B cell (primary cell): ENCODE measurements at regions of chr3 and their contacts with region 1.

Region 1: DNA sequence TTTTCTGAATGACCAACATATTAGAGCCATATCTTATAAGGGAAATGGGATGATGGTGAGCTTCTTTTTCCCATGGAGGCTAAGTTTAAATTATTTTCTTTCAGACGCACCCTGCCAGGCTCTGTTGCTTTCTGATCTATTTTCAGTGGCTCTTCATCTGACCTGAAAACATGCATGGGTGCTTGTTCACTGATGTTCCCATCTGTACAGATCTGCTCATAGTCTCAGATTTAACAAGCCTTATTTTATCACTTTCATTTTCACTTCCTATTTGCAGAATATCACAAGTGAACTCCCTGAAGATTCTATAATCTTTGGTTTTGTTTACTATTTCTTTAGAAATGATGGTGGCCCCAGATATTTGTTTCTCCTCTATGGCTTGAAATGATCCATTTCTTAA is 31.1 kb upstream of the SUCLG2 start:
- DNase-seq: peak; percentile 75
- ATAC-seq: peak; percentile 93
- H3K4me3 ChIP-seq: peak overlapping the region in 2 of 5 experiments; percentile 11 to 42
- H3K4me3 Mint-ChIP-seq: peak overlapping the region; percentile 53
- H3K27ac ChIP-seq: peak overlapping the region; percentile 87 to 90
- H3K27ac Mint-ChIP-seq: peak overlapping the region; percentile 84
- H3K4me1 ChIP-seq: peaks cover 37 to 42% of the 10 kb centered on the region in 2 donors
- H3K4me1 Mint-ChIP-seq: peaks cover 31% of the 10 kb centered on the region
- H3K27me3 ChIP-seq: no peaks in the 10 kb centered on the region
- H3K27me3 Mint-ChIP-seq: no peaks in the 10 kb centered on the region
- CTCF ChIP-seq: no peak

Region 2: GRCh38 chr3:67654099-67654843 is 31.2 kb before region 1 on chr3 and contains the start of gene SUCLG2:
- CTCF ChIA-PET with region 1: interaction called, 4 read pairs
- POLR2A ChIA-PET with region 1: interaction called, 3 read pairs
- intact Hi-C with region 1: loop called (anchors 1 kb)
- DNase-seq: peak; percentile 83
- ATAC-seq: peak; percentile 81
- H3K4me3 ChIP-seq: peak within 1 kb of the TSS; percentile 67 to 90 (median 76)
- H3K4me3 Mint-ChIP-seq: peak within 1 kb of the TSS; percentile 95
- H3K27ac ChIP-seq: peak within 1 kb of the TSS; percentile 84 to 88
- H3K27ac Mint-ChIP-seq: peak within 1 kb of the TSS; percentile 93
- H3K4me1 ChIP-seq: peaks cover 46 to 49% of the 10 kb centered on the region in 2 donors
- H3K4me1 Mint-ChIP-seq: peaks cover 64% of the 10 kb centered on the region
- H3K27me3 ChIP-seq: no peaks in the 10 kb centered on the region
- H3K27me3 Mint-ChIP-seq: no peaks in the 10 kb centered on the region
- CTCF ChIP-seq: no peak
- total RNA-seq, gene SUCLG2: 35.8 and 38.4 TPM in 2 replicates

Region 3: GRCh38 chr3:68228856-68229255 is 543.4 kb after region 1 on chr3:
- CTCF ChIA-PET with region 1: no interaction called
- POLR2A ChIA-PET with region 1: no interaction called
- intact Hi-C with region 1: no loop called
- DNase-seq: no peak
- ATAC-seq: no peak
- H3K4me3 ChIP-seq: no peak overlapping the region
- H3K4me3 Mint-ChIP-seq: no peak overlapping the region
- H3K27ac ChIP-seq: no peak overlapping the region
- H3K27ac Mint-ChIP-seq: no peak overlapping the region
- H3K4me1 ChIP-seq: no peaks in the 10 kb centered on the region
- H3K4me1 Mint-ChIP-seq: no peaks in the 10 kb centered on the region
- H3K27me3 ChIP-seq: no peaks in the 10 kb centered on the region
- H3K27me3 Mint-ChIP-seq: no peaks in the 10 kb centered on the region
- CTCF ChIP-seq: no peak